ENCODE measurements at regions of chr13 and their contacts with region 1.

Region 1: GRCh38 chr13:29508130-29508875 is 87.2 kb downstream of the SLC7A1 start:
- DNase-seq: peak; percentile 85

Region 2: GRCh38 chr13:29496240-29496712 is 12.0 kb before region 1 on chr13:
- CTCF ChIA-PET with region 1: interaction called, 12 read pairs
- POLR2A ChIA-PET with region 1: no interaction called
- DNase-seq: no peak

Region 3: GRCh38 chr13:29523199-29523920 is 15.1 kb after region 1 on chr13:
- CTCF ChIA-PET with region 1: no interaction called
- POLR2A ChIA-PET with region 1: no interaction called
- DNase-seq: no peak

Region 4: GRCh38 chr13:29707876-29708543 is 199.7 kb after region 1 on chr13:
- CTCF ChIA-PET with region 1: interaction called, 14 read pairs
- POLR2A ChIA-PET with region 1: no interaction called
- DNase-seq: peak; percentile 75